Gastrocnemius medialis (tissue), 4 donors: ENCODE measurements at regions of chr4 and their contacts with region 1.

Region 1: GRCh38 chr4:87465739-87466366 is 43.5 kb downstream of the NUDT9 start:
- DNase-seq: no peak
- ATAC-seq: no peak
- H3K4me3 ChIP-seq: no peak overlapping the region
- H3K27ac ChIP-seq: peak overlapping the region in 2 of 4 donors; percentile 10 to 12
- H3K4me1 ChIP-seq: no peaks in the 10 kb centered on the region
- H3K27me3 ChIP-seq: no peaks in the 10 kb centered on the region
- CTCF ChIP-seq: peak; percentile 53 to 75 (median 62)
- POLR2A ChIP-seq: no peak

Region 2: DNA sequence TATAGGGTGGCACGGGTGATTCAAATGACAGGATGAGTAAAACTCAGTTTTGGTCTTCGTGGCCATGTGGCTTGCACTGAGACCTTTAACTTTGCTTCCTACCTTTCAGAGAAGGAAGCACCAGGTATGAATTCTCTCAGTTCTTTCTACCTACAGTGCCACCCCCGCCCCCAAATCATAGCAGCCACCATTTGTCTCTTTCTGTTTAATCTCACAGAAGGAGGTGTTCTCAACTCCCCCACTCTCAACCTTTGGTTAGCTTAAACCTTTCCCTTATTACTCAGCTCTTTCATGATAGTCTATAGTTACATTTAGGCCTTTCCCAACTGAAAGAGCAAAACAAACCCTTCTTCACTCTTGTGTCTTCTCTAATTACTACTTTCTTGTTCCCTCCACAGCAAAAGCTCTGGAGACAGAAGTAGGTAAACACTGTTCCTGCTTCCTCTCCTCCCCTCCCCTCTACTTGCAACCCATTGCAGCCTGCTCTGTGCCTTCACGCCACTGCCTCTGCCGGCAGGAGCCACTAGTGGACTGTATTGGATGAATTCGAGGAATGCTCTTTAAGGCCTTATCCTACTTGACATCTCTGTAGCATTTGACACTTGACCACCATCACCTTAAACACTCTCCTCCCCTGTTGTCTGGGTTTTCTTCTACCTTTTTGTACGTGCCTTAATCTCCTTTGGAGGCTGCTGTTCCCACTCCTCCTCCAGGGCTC is 407.3 kb before region 1 on chr4:
- in situ Hi-C with region 1: no loop called
- intact Hi-C with region 1: no loop called
- DNase-seq: peak in 1 of 2 donors; percentile 46
- ATAC-seq: peak; percentile 49 to 63
- H3K4me3 ChIP-seq: no peak overlapping the region
- H3K27ac ChIP-seq: peak overlapping the region; percentile 79 to 92 (median 86)
- H3K4me1 ChIP-seq: peaks cover 93 to 96% of the 10 kb centered on the region in 2 donors
- H3K27me3 ChIP-seq: no peaks in the 10 kb centered on the region
- CTCF ChIP-seq: peak in 3 of 5 experiments; percentile 5 to 37 (median 9)
- POLR2A ChIP-seq: no peak

Region 3: DNA sequence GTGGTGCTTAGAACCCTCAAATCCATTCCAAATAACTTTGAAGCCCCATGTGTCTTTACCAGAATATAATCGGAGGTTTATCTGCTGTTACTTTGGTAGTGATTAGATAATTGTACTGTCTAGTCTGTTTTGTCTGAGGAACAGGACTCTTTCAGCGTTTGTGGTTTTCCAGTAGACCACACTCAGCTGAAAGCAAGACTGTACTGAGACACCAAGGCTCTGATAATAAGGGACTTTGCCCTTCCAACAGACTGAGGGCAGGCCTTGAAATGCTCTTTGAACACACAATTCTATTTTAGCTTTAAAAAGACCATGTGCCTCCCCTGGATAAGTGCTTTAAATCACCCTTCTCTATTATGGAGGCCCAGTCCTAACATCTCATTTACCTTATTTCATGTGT is 321.5 kb before region 1 on chr4:
- in situ Hi-C with region 1: loop called in 1 of 4 experiments (anchors 25 kb)
- intact Hi-C with region 1: no loop called
- DNase-seq: no peak
- ATAC-seq: no peak
- H3K4me3 ChIP-seq: no peak overlapping the region
- H3K27ac ChIP-seq: no peak overlapping the region
- H3K4me1 ChIP-seq: peaks cover 0 to 9% of the 10 kb centered on the region in 2 donors
- H3K27me3 ChIP-seq: no peaks in the 10 kb centered on the region
- CTCF ChIP-seq: no peak
- POLR2A ChIP-seq: no peak

Region 4: DNA sequence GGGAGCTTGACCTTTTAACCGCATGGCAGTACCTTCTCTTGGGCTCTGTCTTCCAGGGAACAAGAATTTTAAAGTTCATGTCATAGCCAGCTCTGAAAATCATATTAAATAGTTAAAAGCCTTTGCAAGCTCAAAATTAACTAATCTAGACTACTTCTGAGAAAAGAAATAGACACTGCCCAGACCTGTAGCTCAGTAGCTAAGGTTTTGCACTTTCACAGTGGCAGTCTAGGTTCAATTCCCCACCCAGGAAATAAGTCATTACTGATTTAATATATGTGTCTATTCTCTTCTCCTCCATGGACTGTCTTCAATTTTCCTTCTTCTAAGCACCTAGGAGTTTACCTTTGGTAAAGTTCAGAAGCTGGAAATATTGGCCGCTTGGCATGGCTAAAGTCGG is 102.3 kb before region 1 on chr4:
- in situ Hi-C with region 1: no loop called
- intact Hi-C with region 1: loop called (anchors 1 kb)
- DNase-seq: no peak
- ATAC-seq: no peak
- H3K4me3 ChIP-seq: no peak overlapping the region
- H3K27ac ChIP-seq: no peak overlapping the region
- H3K4me1 ChIP-seq: no peaks in the 10 kb centered on the region
- H3K27me3 ChIP-seq: no peaks in the 10 kb centered on the region
- CTCF ChIP-seq: no peak
- POLR2A ChIP-seq: no peak

Region 5: GRCh38 chr4:87375719-87376291 is 90.0 kb before region 1 on chr4:
- in situ Hi-C with region 1: loop called (anchors 5 to 10 kb)
- intact Hi-C with region 1: loop called (anchors 1 kb)
- DNase-seq: peak in 1 of 2 donors; percentile 19
- ATAC-seq: peak; percentile 74 to 75
- H3K4me3 ChIP-seq: no peak overlapping the region
- H3K27ac ChIP-seq: peak overlapping the region in 2 of 4 donors; percentile 13 to 32
- H3K4me1 ChIP-seq: peaks cover 0 to 5% of the 10 kb centered on the region in 2 donors
- H3K27me3 ChIP-seq: no peaks in the 10 kb centered on the region
- CTCF ChIP-seq: peak; percentile 54 to 70 (median 60)
- POLR2A ChIP-seq: no peak